ENCODE measurements at regions of chr2 and their contacts with region 1.

Region 1: GRCh38 chr2:189440947-189441708 is at the start of gene WDR75:
- DNase-seq: peak; percentile 88 to 98 (median 92)

Region 2: DNA sequence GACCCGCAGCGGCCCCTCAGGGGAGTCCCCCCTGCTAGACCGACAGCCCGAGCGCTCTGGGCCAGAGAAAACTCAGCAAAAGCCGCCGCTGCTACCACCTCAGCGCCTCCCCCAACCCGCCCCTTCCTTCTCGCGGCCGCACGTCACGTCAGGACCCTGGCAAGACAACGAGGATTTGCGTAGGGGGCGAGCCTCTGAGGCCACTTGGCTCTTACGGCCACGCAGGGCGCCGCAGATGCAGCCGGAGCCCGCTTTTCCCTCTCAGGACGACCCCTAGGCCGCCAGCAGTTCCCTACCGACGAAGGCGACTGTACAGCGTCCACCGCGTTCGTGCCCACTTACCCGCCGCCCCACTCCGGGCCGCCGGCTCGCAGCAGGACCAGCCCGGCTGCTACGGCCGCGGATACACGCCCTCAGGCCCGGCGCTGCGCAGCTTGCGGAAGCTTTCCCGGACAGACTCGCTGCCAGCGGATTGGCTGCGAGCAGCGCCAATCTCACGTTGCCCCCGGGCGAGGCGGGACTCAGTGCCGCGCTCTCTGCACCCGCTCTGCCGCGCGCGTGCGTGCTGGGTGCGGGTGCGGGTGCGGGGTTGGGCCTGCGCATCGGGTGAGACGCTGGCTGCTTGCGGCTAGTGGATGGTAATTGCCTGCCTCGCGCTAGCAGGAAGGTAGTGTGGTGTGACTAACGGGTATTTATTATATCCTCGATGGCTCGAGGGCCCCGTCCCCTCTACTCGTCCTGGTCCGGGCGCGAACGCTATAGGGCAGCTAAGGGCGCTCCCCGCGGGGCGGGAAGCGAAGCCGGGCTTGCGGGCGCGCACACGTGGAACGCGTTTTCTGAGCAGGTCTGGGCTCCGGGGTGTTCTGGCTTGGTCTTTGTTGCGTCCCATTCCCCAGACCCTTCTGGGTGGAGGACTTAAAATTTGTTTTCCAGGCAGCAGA is 343.1 kb after region 1 on chr2 and contains the starts of genes ORMDL1 and PMS1:
- intact Hi-C with region 1: loop called (anchors 10 kb)
- DNase-seq: peak; percentile 94 to 100 (median 97)

Region 3: DNA sequence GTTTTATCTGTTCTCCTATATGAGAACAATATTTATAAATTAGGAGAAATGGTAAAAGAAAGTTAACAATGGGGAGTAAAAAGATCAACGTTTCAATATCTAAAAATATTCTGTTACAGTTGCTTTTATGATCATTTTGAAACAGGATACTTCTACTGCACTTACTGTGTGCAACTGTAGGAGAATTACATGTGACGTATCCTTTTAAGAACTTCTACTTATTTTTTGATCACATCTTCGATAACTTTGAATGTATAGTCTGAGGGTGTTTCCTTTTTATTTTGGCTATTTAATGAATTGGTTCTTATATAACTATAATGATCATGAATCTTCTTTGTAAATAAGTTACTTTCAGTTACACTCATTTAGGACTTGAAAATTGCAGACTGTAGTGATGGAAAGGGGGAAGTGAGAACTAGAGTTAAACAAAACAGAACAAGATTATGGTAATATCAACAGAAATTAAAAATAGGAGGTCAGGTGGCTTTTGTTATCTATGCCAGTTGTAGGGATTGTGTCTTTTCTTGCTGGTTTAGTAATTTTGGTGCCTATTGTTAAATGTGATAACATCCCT is 511.5 kb after region 1 on chr2:
- intact Hi-C with region 1: no loop called
- DNase-seq: no peak

Measured in posterior cingulate gyrus (tissue), 11 donors.